MCF 10A (cell line): ENCODE measurements at regions of chr20 and their contacts with region 1.

Region 1: DNA sequence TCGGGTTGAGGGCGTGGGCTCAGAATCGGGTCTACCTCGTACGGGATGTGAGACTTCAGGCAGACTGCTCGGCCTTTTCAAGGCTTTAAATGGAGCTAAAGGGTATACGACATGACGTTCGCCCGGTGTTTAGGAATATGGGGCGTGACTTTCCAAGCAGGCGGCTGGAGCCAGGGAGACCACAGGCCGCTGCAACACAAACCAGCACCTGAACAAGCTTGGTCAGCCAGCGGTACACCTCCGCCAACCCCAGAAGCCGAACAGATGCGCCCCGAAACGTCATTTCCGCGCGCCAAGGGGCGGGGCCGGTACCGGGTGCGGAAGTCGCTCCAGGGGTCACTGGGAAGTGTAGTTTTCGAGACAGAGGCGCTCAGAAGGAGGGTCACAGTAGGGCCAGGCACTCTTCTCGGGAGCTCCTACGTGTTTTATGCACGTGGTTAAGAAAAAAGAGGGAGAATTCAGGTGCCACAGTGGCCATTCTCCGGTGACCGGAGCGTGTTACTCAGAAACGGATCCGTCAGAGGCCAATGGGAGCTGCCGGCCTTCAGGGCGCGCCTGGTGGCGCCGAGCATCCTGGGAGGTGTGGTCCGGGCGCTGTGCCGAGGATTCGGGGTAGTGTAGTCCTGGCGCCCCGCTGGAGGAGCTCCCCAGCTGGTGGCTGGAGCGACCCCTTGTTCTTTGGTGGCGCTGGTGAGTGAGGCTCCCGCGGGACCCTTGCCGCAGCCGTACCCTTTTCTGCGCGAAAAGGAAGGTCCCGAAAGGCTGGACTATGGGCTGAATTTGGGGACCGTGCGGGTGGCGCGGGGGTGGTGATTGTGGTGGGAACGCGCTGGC is at the start of gene ZNF133:
- DNase-seq: peak; percentile 94
- H3K4me3 Mint-ChIP-seq: peak within 1 kb of the TSS; percentile 100
- H3K27ac Mint-ChIP-seq: peak within 1 kb of the TSS; percentile 98
- H3K4me1 Mint-ChIP-seq: peaks cover 35% of the 10 kb centered on the region
- H3K27me3 Mint-ChIP-seq: no peaks in the 10 kb centered on the region
- CTCF ChIP-seq: no peak
- total RNA-seq, gene ZNF133: 25.3 and 30.4 TPM in 2 replicates

Region 2: DNA sequence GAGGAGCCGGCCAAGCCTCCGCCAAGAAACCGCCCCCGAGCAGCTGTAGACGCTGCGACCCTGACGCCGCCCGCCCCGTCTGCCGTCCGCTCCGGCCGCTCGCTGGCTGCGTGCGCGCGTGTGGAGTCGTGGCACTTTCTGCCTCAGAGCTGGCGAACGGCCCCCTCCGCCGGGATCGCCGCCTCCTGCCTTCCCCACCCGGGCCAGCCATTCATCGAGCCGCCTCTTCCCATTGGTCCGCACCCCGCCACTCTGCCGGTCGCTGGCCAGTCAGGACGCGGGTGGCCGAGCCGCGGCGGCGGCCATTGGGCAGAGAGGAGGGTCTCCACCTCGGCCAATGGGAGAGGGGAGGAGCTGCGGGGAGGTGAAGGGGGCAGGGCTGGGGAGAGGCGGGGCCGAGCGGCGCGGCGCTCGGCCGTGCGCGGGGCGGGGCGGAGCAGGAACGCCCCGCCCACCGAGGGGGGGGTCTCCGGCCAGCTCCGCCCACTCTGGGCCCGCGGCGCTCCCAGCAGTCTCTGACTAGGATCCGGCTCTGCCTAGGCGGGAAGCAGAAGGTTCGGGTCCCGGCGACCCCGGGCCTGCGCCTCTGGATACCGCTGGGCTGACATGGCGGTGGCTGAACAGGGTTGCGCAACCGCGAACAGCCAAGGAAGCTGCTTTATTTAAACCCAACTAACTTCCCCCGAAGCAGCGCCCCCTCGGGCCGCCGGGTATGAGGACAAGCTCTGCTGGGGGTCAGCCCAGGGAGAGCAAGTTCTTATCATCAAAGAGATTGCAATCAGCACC is 605.8 kb before region 1 on chr20 and contains the start of gene RRBP1:
- CTCF ChIA-PET with region 1: no interaction called
- POLR2A ChIA-PET with region 1: interaction called, 6 read pairs
- intact Hi-C with region 1: loop called (anchors 10 kb)
- DNase-seq: peak; percentile 97
- H3K4me3 Mint-ChIP-seq: peak within 1 kb of the TSS; percentile 81
- H3K27ac Mint-ChIP-seq: peak within 1 kb of the TSS; percentile 61
- H3K4me1 Mint-ChIP-seq: peaks cover 11% of the 10 kb centered on the region
- H3K27me3 Mint-ChIP-seq: peaks cover 41% of the 10 kb centered on the region
- CTCF ChIP-seq: peak; percentile 65
- total RNA-seq, gene RRBP1: 203 and 244 TPM in 2 replicates

Region 3: GRCh38 chr20:18056174-18057100 is 231.7 kb before region 1 on chr20:
- CTCF ChIA-PET with region 1: no interaction called
- POLR2A ChIA-PET with region 1: interaction called, 17 read pairs
- intact Hi-C with region 1: no loop called
- DNase-seq: peak; percentile 21
- H3K4me3 Mint-ChIP-seq: peak overlapping the region; percentile 71
- H3K27ac Mint-ChIP-seq: no peak overlapping the region
- H3K4me1 Mint-ChIP-seq: peaks cover 20% of the 10 kb centered on the region
- H3K27me3 Mint-ChIP-seq: peaks cover 29% of the 10 kb centered on the region
- CTCF ChIP-seq: no peak

Region 4: GRCh38 chr20:18224968-18225568 is 63.1 kb before region 1 on chr20:
- CTCF ChIA-PET with region 1: no interaction called
- POLR2A ChIA-PET with region 1: interaction called, 20 read pairs
- intact Hi-C with region 1: no loop called
- DNase-seq: peak; percentile 91
- H3K4me3 Mint-ChIP-seq: peak overlapping the region; percentile 63
- H3K27ac Mint-ChIP-seq: peak overlapping the region; percentile 92
- H3K4me1 Mint-ChIP-seq: peaks cover 21% of the 10 kb centered on the region
- H3K27me3 Mint-ChIP-seq: no peaks in the 10 kb centered on the region
- CTCF ChIP-seq: no peak

Region 5: DNA sequence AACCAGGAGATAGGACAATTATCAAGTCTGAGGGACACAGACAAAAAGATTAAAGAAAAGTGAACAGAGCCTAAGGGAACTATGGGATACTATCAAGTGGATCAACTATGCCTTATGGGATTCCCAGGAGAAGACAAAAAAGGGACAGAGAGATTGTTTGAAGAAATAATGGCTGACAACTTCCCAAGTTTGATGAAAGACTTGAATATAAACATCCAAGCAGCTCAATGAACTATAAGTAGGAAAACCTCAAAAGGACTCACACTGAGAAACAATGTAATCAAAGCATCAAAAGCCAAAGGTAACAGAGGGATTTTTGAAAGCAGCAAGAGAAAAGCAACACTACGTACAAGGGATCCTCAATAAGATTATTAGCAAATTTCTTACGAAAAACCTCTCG is 11.2 kb after region 1 on chr20:
- CTCF ChIA-PET with region 1: interaction called, 4 read pairs
- POLR2A ChIA-PET with region 1: interaction called, 29 read pairs
- intact Hi-C with region 1: no loop called
- DNase-seq: no peak
- H3K4me3 Mint-ChIP-seq: no peak overlapping the region
- H3K27ac Mint-ChIP-seq: peak overlapping the region; percentile 63
- H3K4me1 Mint-ChIP-seq: no peaks in the 10 kb centered on the region
- H3K27me3 Mint-ChIP-seq: no peaks in the 10 kb centered on the region
- CTCF ChIP-seq: no peak

Region 6: DNA sequence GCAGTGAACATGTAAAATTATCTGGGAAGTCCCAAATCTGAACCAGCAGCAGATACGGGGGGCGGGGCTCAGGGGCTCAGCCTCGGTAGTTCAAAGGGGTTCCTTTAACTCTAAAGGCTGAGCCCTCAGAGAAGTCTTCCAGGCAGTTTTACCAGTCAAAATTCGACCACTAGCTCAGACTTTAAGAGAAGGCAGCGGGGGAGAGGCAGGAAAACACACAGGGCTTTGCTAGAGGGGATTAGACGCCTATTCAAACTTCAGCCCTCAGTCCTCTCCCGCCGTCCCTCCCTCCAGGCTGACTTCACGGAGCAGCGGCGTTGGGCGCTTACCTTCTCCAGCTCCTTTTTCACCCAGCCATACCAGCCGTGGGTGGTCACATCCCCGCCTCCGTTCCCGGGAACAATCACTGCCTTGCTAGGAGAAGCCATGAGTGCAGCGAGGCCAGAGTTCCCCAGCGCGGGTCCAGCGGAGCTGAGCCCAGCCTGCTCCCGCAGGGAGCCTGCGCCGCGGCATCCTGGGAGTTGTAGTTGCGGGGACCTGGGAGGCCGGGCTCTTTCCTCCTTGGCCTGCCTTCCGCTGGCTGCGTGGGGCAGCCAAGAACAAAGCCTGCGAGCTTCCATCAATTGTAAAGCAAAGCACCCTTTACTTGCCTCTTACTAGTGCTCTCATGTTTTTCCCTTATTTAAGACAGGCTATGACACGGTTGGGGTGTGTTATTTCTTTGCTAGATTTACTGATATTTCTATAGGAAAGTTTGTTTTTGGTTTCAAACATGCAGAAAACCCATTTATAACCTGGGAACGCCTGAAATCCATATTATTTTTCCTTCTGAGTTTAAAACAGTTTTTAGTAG is 208.8 kb after region 1 on chr20 and contains the start of gene RBBP9:
- CTCF ChIA-PET with region 1: no interaction called
- POLR2A ChIA-PET with region 1: interaction called, 17 read pairs
- intact Hi-C with region 1: no loop called
- DNase-seq: peak; percentile 83
- H3K4me3 Mint-ChIP-seq: peak within 1 kb of the TSS; percentile 91
- H3K27ac Mint-ChIP-seq: peak within 1 kb of the TSS; percentile 87
- H3K4me1 Mint-ChIP-seq: no peaks in the 10 kb centered on the region
- H3K27me3 Mint-ChIP-seq: no peaks in the 10 kb centered on the region
- CTCF ChIP-seq: no peak
- total RNA-seq, gene RBBP9: 6.8 and 7.3 TPM in 2 replicates

Region 7: GRCh38 chr20:18639501-18639979 is 351.4 kb after region 1 on chr20:
- CTCF ChIA-PET with region 1: no interaction called
- POLR2A ChIA-PET with region 1: no interaction called
- intact Hi-C with region 1: no loop called
- DNase-seq: no peak
- H3K4me3 Mint-ChIP-seq: no peak overlapping the region
- H3K27ac Mint-ChIP-seq: no peak overlapping the region
- H3K4me1 Mint-ChIP-seq: no peaks in the 10 kb centered on the region
- H3K27me3 Mint-ChIP-seq: no peaks in the 10 kb centered on the region
- CTCF ChIP-seq: no peak